ENCODE measurements at regions of chr11 and their contacts with region 1.

Region 1: GRCh38 chr11:95790123-95790932 is at the start of gene CEP57:
- DNase-seq: peak; percentile 87 to 97 (median 90)
- ATAC-seq: peak; percentile 54
- H3K4me3 ChIP-seq: peak within 1 kb of the TSS; percentile 93
- H3K4me3 Mint-ChIP-seq: peak within 1 kb of the TSS; percentile 96
- H3K27ac ChIP-seq: peak within 1 kb of the TSS; percentile 99 to 100
- H3K27ac Mint-ChIP-seq: peak within 1 kb of the TSS; percentile 100
- H3K4me1 ChIP-seq: peaks cover 24% of the 10 kb centered on the region
- H3K4me1 Mint-ChIP-seq: peaks cover 61% of the 10 kb centered on the region
- H3K27me3 ChIP-seq: no peaks in the 10 kb centered on the region
- H3K27me3 Mint-ChIP-seq: no peaks in the 10 kb centered on the region
- CTCF ChIP-seq: no peak
- total RNA-seq, gene CEP57: 43.5 to 46.6 TPM

Region 2: GRCh38 chr11:94511932-94512781 is 1278.2 kb before region 1 on chr11 and contains the start of gene C11orf97:
- CTCF ChIA-PET with region 1: no interaction called
- POLR2A ChIA-PET with region 1: no interaction called
- intact Hi-C with region 1: loop called in 1 of 2 experiments (anchors 10 kb)
- DNase-seq: peak; percentile 12 to 76 (median 44)
- ATAC-seq: peak; percentile 74
- H3K4me3 ChIP-seq: peak within 1 kb of the TSS; percentile 28
- H3K4me3 Mint-ChIP-seq: peak within 1 kb of the TSS; percentile 81
- H3K27ac ChIP-seq: no peak within 1 kb of the TSS
- H3K27ac Mint-ChIP-seq: no peak within 1 kb of the TSS
- H3K4me1 ChIP-seq: peaks cover 10% of the 10 kb centered on the region
- H3K4me1 Mint-ChIP-seq: peaks cover 18% of the 10 kb centered on the region
- H3K27me3 ChIP-seq: peaks cover 10 to 22% of the 10 kb centered on the region in 2 experiments
- H3K27me3 Mint-ChIP-seq: peaks cover 60% of the 10 kb centered on the region
- CTCF ChIP-seq: no peak
- total RNA-seq, gene C11orf97: not detected

Region 3: GRCh38 chr11:94973099-94973968 is 817.0 kb before region 1 on chr11 and contains the starts of genes CWC15 and KDM4D:
- CTCF ChIA-PET with region 1: interaction called, 3 read pairs
- POLR2A ChIA-PET with region 1: interaction called, 24 read pairs
- intact Hi-C with region 1: loop called in 1 of 2 experiments (anchors 2 kb)
- DNase-seq: peak; percentile 89 to 97 (median 92)
- ATAC-seq: peak; percentile 99
- H3K4me3 ChIP-seq: peak within 1 kb of the TSS; percentile 89
- H3K4me3 Mint-ChIP-seq: peak within 1 kb of the TSS; percentile 99
- H3K27ac ChIP-seq: peak within 1 kb of the TSS; percentile 68 to 77
- H3K27ac Mint-ChIP-seq: peak within 1 kb of the TSS; percentile 92
- H3K4me1 ChIP-seq: no peaks in the 10 kb centered on the region
- H3K4me1 Mint-ChIP-seq: peaks cover 42% of the 10 kb centered on the region
- H3K27me3 ChIP-seq: no peaks in the 10 kb centered on the region
- H3K27me3 Mint-ChIP-seq: no peaks in the 10 kb centered on the region
- CTCF ChIP-seq: no peak
- total RNA-seq, gene CWC15: 121 to 124 TPM
- total RNA-seq, gene KDM4D: 0.16 to 0.22 TPM

Region 4: GRCh38 chr11:95089620-95090542 is 700.4 kb before region 1 on chr11 and contains the start of gene ENDOD1:
- CTCF ChIA-PET with region 1: no interaction called
- POLR2A ChIA-PET with region 1: interaction called, 76 read pairs
- intact Hi-C with region 1: loop called in 1 of 2 experiments (anchors 5 kb)
- DNase-seq: peak; percentile 70 to 94 (median 84)
- ATAC-seq: peak; percentile 94
- H3K4me3 ChIP-seq: peak within 1 kb of the TSS; percentile 78
- H3K4me3 Mint-ChIP-seq: peak within 1 kb of the TSS; percentile 92
- H3K27ac ChIP-seq: peak within 1 kb of the TSS; percentile 77 to 84
- H3K27ac Mint-ChIP-seq: peak within 1 kb of the TSS; percentile 95
- H3K4me1 ChIP-seq: peaks cover 34% of the 10 kb centered on the region
- H3K4me1 Mint-ChIP-seq: peaks cover 50% of the 10 kb centered on the region
- H3K27me3 ChIP-seq: no peaks in the 10 kb centered on the region
- H3K27me3 Mint-ChIP-seq: no peaks in the 10 kb centered on the region
- CTCF ChIP-seq: no peak
- total RNA-seq, gene ENDOD1: 3.8 to 4.4 TPM

Region 5: DNA sequence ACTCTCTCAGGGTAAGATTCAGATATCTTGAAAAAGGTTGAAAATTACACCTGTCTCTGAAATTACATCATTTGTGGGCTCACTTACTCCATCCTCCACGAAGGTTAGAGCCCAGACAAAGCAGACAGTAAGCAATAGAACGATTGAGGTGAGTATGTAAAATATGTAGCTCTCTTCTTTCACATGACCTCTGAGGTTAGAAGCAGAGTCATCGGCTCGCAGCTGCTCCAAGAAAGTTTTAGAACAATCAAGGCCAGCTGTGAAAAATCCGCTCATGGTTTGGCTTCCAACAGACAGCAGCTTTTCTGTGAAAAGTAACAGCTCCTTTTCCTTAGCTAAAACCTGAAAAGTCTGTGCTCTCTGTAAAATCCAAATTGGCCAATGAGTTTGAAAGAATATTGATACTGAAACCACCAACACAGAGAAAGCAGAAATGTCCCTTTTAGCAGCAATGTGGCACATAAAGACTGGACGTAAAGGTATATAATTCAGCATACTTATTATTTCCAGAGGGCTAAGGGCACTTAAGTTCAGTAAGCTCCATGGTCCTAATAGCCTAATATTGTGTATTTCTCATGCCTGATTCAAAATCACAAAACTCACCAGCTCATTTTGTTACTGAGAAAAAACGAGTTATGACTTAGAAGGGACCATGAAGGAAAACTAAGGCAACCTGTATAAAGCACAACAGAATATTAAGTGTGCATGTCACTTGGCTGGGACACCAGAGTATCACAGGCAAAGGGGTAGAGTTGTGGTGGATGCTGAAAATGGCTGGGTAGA is 79.0 kb before region 1 on chr11:
- CTCF ChIA-PET with region 1: no interaction called
- POLR2A ChIA-PET with region 1: no interaction called
- intact Hi-C with region 1: no loop called
- DNase-seq: peak in 1 of 14 experiments; percentile 24
- ATAC-seq: peak; percentile 48
- H3K4me3 ChIP-seq: no peak overlapping the region
- H3K4me3 Mint-ChIP-seq: no peak overlapping the region
- H3K27ac ChIP-seq: no peak overlapping the region
- H3K27ac Mint-ChIP-seq: no peak overlapping the region
- H3K4me1 ChIP-seq: peaks cover 6% of the 10 kb centered on the region
- H3K4me1 Mint-ChIP-seq: peaks cover 14% of the 10 kb centered on the region
- H3K27me3 ChIP-seq: no peaks in the 10 kb centered on the region
- H3K27me3 Mint-ChIP-seq: peaks cover 6% of the 10 kb centered on the region
- CTCF ChIP-seq: no peak

Region 6: GRCh38 chr11:95764267-95764898 is 25.9 kb before region 1 on chr11:
- CTCF ChIA-PET with region 1: interaction called, 3 read pairs
- POLR2A ChIA-PET with region 1: interaction called, 13 read pairs
- intact Hi-C with region 1: no loop called
- DNase-seq: peak in 3 of 14 experiments; percentile 73 to 76 (median 75)
- ATAC-seq: peak; percentile 91
- H3K4me3 ChIP-seq: no peak overlapping the region
- H3K4me3 Mint-ChIP-seq: no peak overlapping the region
- H3K27ac ChIP-seq: no peak overlapping the region
- H3K27ac Mint-ChIP-seq: no peak overlapping the region
- H3K4me1 ChIP-seq: no peaks in the 10 kb centered on the region
- H3K4me1 Mint-ChIP-seq: no peaks in the 10 kb centered on the region
- H3K27me3 ChIP-seq: no peaks in the 10 kb centered on the region
- H3K27me3 Mint-ChIP-seq: no peaks in the 10 kb centered on the region
- CTCF ChIP-seq: peak; percentile 80

Region 7: DNA sequence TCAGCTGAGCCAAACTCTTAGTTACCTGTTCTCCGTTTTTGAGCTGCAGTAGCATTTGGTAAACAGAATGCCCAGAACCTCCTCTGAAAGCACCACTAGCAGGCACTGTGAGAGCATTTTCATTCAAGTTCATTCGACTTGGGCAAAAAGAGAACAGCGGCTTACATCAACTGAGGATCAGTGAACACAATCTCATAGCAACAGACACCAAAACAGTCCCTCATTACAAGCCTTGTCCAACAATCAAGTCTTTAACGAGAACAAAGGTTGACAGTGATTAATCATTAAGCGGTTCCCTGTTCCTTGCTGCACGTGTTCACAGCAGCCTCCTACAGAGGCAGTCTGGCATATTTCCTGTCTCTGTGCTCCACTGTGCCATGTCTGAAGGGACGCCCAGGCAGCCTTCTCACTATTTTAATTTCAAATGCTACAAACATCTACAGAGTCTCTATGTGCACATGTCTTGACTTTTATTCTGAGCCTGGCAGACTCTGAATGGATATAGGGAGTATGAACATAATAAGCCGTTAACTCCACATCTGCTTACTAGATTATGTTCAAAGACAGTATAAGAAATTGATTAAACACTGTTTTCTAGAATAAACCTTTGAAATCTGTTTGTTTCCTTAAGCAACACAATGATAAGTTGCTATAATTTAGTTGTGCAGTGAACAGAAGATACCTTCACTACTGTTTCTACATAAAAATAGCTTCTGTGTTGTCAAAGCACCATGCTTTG is 221.9 kb after region 1 on chr11:
- CTCF ChIA-PET with region 1: no interaction called
- POLR2A ChIA-PET with region 1: interaction called, 20 read pairs
- intact Hi-C with region 1: loop called in 1 of 2 experiments (anchors 5 kb)
- DNase-seq: peak; percentile 34 to 89 (median 57)
- ATAC-seq: peak; percentile 75
- H3K4me3 ChIP-seq: peak overlapping the region; percentile 24
- H3K4me3 Mint-ChIP-seq: peak overlapping the region; percentile 54
- H3K27ac ChIP-seq: peak overlapping the region; percentile 10 to 82
- H3K27ac Mint-ChIP-seq: no peak overlapping the region
- H3K4me1 ChIP-seq: peaks cover 33% of the 10 kb centered on the region
- H3K4me1 Mint-ChIP-seq: peaks cover 21% of the 10 kb centered on the region
- H3K27me3 ChIP-seq: no peaks in the 10 kb centered on the region
- H3K27me3 Mint-ChIP-seq: no peaks in the 10 kb centered on the region
- CTCF ChIP-seq: peak; percentile 39